ENCODE measurements at regions of chr16 and their contacts with region 1.

Region 1: GRCh38 chr16:84672276-84673202 is 24.2 kb downstream of the KLHL36 start:
- DNase-seq: peak; percentile 48
- ATAC-seq: peak; percentile 96
- H3K4me3 ChIP-seq: no peak overlapping the region
- H3K27ac ChIP-seq: no peak overlapping the region
- H3K4me1 ChIP-seq: peaks cover 0 to 5% of the 10 kb centered on the region in 2 experiments; a peak in 1 of 4 replicates
- H3K27me3 ChIP-seq: peaks cover 13% of the 10 kb centered on the region; the same call in 1 of the 2 replicates
- CTCF ChIP-seq: peak; percentile 85 to 97 (median 95)
- POLR2A ChIP-seq: no peak
- RAD21 ChIP-seq: peak; percentile 72

Region 2: DNA sequence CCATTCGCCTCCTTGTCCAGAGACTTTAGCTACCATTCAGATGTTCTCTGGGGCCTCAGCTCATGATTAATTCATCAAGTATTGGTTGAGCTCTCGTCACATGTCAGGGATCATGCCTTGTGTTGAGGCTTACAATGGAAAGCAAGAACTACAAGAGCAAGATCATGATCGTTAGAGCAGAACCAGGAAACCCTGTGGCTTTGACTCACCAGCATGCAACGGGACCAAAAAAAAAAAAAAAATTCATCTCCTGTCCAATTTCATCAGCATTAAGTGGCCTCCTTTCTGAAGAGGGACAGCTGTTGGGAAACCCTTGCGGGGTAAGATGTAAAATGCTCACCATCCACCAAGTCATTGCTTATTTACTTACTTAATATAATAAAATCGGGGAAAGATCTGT is 15.2 kb after region 1 on chr16:
- CTCF ChIA-PET with region 1: interaction called, 34 read pairs
- POLR2A ChIA-PET with region 1: interaction called, 3 read pairs
- RAD21 ChIA-PET with region 1: no interaction called
- intact Hi-C with region 1: no loop called
- DNase-seq: no peak
- ATAC-seq: no peak
- H3K4me3 ChIP-seq: no peak overlapping the region
- H3K27ac ChIP-seq: no peak overlapping the region
- H3K4me1 ChIP-seq: peaks cover 0 to 4% of the 10 kb centered on the region in 2 experiments; a peak in 1 of 4 replicates
- H3K27me3 ChIP-seq: peaks cover 4% of the 10 kb centered on the region; the same call in 1 of the 2 replicates
- CTCF ChIP-seq: no peak
- POLR2A ChIP-seq: no peak
- RAD21 ChIP-seq: no peak

Measured in HCT116 (cell line).